PC-9 (cell line): ENCODE measurements at regions of chr7 and their contacts with region 1.

Region 1: GRCh38 chr7:98086281-98086718 is 20.4 kb upstream of the LMTK2 start:
- DNase-seq: peak; percentile 95 to 98
- H3K4me3 ChIP-seq: peak overlapping the region; percentile 11; the same call in 1 of the 2 replicates
- H3K27ac ChIP-seq: peak overlapping the region; percentile 94
- H3K4me1 ChIP-seq: peaks cover 51% of the 10 kb centered on the region
- H3K27me3 ChIP-seq: no peaks in the 10 kb centered on the region
- CTCF ChIP-seq: no peak

Region 2: DNA sequence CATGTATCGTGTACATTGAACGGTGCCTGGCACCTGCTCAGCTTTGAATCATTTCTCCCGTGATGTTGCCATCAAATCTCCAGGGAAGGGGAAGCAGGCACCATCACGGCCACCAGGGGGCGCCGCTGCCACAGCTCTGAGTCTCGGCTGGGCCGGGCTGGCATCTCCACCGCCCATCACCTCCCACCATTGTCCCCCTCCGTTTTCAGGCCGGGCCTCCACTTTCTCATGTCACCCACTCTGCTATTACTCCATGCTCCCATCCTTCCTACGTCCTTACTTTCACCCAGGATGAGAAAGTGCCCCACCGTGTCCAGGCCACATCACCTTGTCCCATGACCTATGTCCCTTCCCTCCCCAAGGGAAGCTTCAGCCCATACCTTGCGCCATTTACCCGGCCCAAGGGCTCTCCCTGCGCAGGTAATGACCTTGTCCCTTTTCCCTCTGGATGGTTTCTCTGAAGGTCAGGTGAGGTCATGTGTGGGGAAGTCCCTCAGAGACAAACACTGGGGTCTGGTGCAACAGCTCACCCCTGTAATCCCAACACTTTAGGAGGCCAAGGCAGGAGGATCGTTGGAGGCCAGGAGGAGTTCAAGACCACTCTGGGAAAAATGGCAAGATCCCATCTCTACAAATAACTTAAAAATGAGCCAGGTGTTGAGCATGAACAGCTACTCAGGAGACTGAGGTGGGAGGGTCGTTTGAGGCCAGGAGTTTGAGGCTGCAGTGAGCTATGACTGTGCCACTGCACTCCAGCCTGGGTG is 64.5 kb before region 1 on chr7:
- CTCF ChIA-PET with region 1: interaction called, 12 read pairs
- POLR2A ChIA-PET with region 1: interaction called, 3 read pairs
- intact Hi-C with region 1: no loop called
- DNase-seq: peak; percentile 55 to 85
- H3K4me3 ChIP-seq: no peak overlapping the region
- H3K27ac ChIP-seq: no peak overlapping the region
- H3K4me1 ChIP-seq: no peaks in the 10 kb centered on the region
- H3K27me3 ChIP-seq: no peaks in the 10 kb centered on the region
- CTCF ChIP-seq: peak; percentile 94

Region 3: GRCh38 chr7:98051118-98051744 is 35.1 kb before region 1 on chr7:
- CTCF ChIA-PET with region 1: no interaction called
- POLR2A ChIA-PET with region 1: interaction called, 8 read pairs
- intact Hi-C with region 1: loop called (anchors 1 kb)
- DNase-seq: peak in 1 of 2 experiments; percentile 11
- H3K4me3 ChIP-seq: no peak overlapping the region
- H3K27ac ChIP-seq: no peak overlapping the region
- H3K4me1 ChIP-seq: peaks cover 24% of the 10 kb centered on the region
- H3K27me3 ChIP-seq: no peaks in the 10 kb centered on the region
- CTCF ChIP-seq: no peak